ENCODE measurements at regions of chr17 and their contacts with region 1.

Region 1: GRCh38 chr17:54840885-54841591 is 59.6 kb upstream of the TOM1L1 start:
- DNase-seq: no peak
- H3K4me3 ChIP-seq: no peak overlapping the region
- H3K27ac ChIP-seq: no peak overlapping the region
- H3K4me1 ChIP-seq: no peaks in the 10 kb centered on the region
- H3K27me3 ChIP-seq: no peaks in the 10 kb centered on the region
- CTCF ChIP-seq: no peak
- EP300 ChIP-seq: no peak
- POLR2A ChIP-seq: no peak

Region 2: DNA sequence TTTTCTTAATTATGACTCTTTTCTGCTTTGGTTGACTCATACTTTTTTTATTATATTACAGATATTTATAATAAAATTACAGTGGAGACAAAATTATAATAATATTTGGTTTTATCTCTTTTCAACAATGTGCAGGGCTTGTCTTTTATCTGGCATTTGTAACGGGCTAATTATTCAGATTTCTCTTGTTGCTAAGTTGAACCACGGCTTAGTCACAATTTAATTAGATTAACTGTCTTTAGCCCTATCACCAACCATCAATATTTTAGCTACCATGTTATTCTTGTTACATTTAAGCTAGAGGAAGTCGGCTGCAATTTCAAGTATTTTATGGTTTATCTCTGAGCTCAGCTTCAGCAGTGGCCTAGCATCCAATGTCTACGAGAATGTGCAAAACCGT is 1883.6 kb before region 1 on chr17:
- in situ Hi-C with region 1: no loop called
- intact Hi-C with region 1: loop called (anchors 5 kb)
- DNase-seq: no peak
- H3K4me3 ChIP-seq: no peak overlapping the region
- H3K27ac ChIP-seq: no peak overlapping the region
- H3K4me1 ChIP-seq: no peaks in the 10 kb centered on the region
- H3K27me3 ChIP-seq: no peaks in the 10 kb centered on the region
- CTCF ChIP-seq: no peak
- EP300 ChIP-seq: no peak
- POLR2A ChIP-seq: no peak

Region 3: GRCh38 chr17:53353919-53354351 is 1487.1 kb before region 1 on chr17:
- in situ Hi-C with region 1: no loop called
- intact Hi-C with region 1: no loop called
- DNase-seq: peak; percentile 22
- H3K4me3 ChIP-seq: no peak overlapping the region
- H3K27ac ChIP-seq: no peak overlapping the region
- H3K4me1 ChIP-seq: no peaks in the 10 kb centered on the region
- H3K27me3 ChIP-seq: no peaks in the 10 kb centered on the region
- CTCF ChIP-seq: no peak
- EP300 ChIP-seq: no peak
- POLR2A ChIP-seq: no peak

Region 4: DNA sequence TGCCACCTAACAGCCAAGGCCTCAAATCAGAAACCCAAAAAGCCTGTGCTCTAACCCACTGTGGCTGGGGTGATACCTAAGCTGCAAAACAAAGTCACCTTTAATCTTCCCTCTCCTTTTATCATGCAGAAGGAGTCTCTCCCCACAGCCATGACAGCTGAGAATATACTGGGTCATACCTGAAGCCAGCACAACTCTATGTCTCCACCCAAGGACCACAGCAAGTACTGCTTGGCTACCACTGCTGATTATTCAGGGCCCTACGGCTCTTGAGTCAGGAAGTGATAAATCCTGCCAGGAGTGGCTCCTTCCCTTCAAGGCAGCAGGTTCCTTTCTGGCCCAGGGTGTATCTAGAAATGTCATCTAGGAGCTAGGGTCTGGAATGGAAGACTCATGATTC is 91.9 kb before region 1 on chr17:
- in situ Hi-C with region 1: loop called in 1 of 4 experiments (anchors 25 kb)
- intact Hi-C with region 1: no loop called
- DNase-seq: no peak
- H3K4me3 ChIP-seq: no peak overlapping the region
- H3K27ac ChIP-seq: no peak overlapping the region
- H3K4me1 ChIP-seq: no peaks in the 10 kb centered on the region
- H3K27me3 ChIP-seq: no peaks in the 10 kb centered on the region
- CTCF ChIP-seq: no peak
- EP300 ChIP-seq: no peak
- POLR2A ChIP-seq: no peak